GM23248 (cell line): ENCODE measurements at regions of chr7 and their contacts with region 1.

Region 1: DNA sequence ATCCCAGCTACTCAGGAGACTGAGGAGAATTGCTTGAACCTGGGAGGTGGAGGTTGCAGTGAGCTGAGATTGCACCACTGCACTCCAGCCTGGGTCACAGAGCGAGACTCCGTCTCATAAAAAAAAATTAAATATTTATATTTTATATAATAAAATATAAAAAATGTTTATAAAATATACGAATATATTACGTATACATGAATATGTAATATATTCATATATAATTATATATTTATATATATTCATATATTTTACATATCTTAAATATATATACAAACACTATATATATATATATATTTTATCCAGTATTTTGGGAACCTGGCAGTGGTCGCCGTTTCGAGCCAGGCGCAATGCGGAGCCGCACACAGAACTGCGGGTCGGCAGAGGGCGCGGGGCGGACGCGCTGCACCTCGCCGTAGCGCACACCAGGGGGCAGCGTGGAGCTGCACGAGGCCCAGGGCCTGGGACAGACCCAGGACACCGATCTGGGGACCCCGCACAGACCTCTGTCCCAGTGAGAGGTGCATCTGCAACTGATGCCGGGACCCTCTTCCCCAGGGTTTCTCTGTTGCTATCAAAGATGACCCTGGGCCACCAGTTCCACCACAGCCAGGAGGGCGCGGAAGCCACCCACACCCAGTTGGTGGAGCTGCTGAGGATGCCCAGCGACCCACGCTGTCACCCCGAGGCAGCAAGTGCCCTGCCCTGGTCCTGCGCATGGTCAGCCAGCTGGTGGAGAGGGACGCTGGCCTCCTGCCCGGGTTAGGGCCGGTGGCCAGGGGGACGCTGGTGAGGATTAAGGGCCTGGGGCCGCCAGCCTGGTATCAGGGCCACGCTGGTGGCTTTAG is 22.7 kb downstream of the AP5Z1 start:
- DNase-seq: peak; percentile 67
- H3K4me3 ChIP-seq: no peak overlapping the region
- H3K27ac ChIP-seq: no peak overlapping the region
- H3K4me1 ChIP-seq: no peaks in the 10 kb centered on the region
- H3K27me3 ChIP-seq: no peaks in the 10 kb centered on the region

Region 2: GRCh38 chr7:5083311-5083711 is 285.2 kb after region 1 on chr7:
- in situ Hi-C with region 1: loop called (anchors 10 kb)
- DNase-seq: no peak
- H3K4me3 ChIP-seq: no peak overlapping the region
- H3K27ac ChIP-seq: no peak overlapping the region
- H3K4me1 ChIP-seq: no peaks in the 10 kb centered on the region
- H3K27me3 ChIP-seq: peaks cover 9% of the 10 kb centered on the region; the same call in 1 of the 2 replicates

Region 3: GRCh38 chr7:5375925-5376324 is 577.8 kb after region 1 on chr7:
- in situ Hi-C with region 1: no loop called
- DNase-seq: no peak
- H3K4me3 ChIP-seq: no peak overlapping the region
- H3K27ac ChIP-seq: no peak overlapping the region
- H3K4me1 ChIP-seq: no peaks in the 10 kb centered on the region
- H3K27me3 ChIP-seq: no peaks in the 10 kb centered on the region